PC-9 (cell line): ENCODE measurements at regions of chr13 and their contacts with region 1.

Region 1: DNA sequence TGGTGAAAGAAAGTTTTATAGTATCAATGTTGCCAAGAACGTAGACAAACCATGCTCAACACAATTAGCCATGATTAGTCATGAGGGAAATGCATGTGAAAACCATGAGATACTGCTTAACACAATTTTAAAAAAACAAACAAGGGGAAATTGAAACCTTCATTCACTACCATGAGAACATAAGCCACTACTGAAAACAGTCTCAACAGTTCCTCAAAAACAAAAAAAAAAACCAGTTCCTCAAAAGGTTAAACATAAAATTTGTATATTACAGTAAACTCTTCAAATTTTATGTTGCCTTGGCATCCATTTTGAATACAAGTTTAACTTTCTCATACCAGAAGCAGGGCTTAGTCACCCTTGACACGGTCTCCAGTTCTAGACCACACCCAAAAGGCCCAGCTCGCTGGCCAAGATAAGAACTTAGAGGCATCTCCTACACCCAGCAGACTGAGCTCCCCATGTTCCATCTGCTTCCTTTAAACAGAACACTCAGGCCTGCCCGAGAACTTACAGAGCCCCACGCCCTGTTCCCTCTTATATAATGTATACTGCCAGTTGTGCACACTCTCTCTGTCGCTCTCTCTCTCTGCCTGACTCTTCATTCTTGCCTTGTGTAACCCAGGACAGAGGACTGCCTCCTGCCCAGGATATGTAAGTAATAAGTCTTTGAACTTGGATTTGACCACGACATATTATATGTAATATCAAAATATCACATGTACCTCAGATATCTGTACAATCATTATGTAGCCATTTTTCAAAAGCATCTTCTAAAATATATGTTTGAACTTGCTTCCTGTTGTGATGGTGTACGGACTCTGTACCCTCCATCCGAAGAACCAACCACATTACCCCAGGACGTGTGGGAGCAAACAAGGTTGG is 67.4 kb downstream of the STK24 start:
- DNase-seq: peak; percentile 71 to 91
- H3K4me3 ChIP-seq: peak overlapping the region; percentile 31; the same call in 1 of the 2 replicates
- H3K27ac ChIP-seq: peak overlapping the region; percentile 99
- H3K4me1 ChIP-seq: peaks cover 58% of the 10 kb centered on the region
- H3K27me3 ChIP-seq: no peaks in the 10 kb centered on the region
- CTCF ChIP-seq: no peak

Region 2: DNA sequence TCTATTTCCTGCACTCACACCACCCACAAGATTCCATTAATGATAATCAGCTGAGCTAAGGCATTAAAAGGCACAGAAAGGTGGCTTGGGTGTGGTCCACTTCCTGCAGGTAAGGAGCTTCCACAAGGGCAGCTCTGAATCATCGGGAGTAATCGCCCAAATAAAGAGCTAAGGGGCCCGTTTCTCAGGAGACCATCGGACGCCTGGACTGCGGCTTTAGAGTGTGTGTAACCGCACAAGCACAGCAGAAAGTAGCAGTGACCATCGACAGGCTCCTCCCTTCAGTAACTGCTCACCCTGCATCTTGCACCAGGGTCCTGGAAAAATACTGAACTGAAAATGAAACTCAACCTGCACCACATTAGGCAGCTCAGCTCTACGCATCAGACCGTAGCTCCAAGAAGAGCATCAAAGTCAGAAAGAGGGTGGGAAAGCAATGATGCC is 61.4 kb after region 1 on chr13:
- CTCF ChIA-PET with region 1: no interaction called
- POLR2A ChIA-PET with region 1: interaction called, 5 read pairs
- intact Hi-C with region 1: loop called (anchors 1 kb)
- DNase-seq: peak; percentile 68 to 98
- H3K4me3 ChIP-seq: peak overlapping the region; percentile 98; the same call in 1 of the 2 replicates
- H3K27ac ChIP-seq: peak overlapping the region; percentile 86
- H3K4me1 ChIP-seq: peaks cover 69% of the 10 kb centered on the region
- H3K27me3 ChIP-seq: no peaks in the 10 kb centered on the region
- CTCF ChIP-seq: no peak

Region 3: DNA sequence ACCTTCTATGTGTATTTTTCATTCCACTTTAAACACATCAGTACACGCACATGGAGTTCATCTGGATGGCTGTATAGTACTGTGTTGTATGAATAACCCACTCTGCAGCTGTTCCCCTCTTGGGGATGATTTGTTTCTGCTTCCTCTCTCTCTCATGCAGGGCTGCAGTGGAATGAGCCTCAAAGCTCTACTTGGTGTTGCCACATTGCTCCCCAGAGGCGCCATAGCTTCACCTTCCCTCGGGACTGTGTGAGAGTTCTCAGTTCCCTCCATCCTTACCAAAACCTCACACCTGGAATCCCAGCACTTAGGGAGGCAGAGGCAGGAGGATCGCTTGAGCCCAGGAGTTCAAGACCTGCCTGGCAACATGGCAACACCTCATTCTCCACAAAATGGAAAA is 826.1 kb after region 1 on chr13:
- CTCF ChIA-PET with region 1: no interaction called
- POLR2A ChIA-PET with region 1: no interaction called
- intact Hi-C with region 1: no loop called
- DNase-seq: no peak
- H3K4me3 ChIP-seq: no peak overlapping the region
- H3K27ac ChIP-seq: no peak overlapping the region
- H3K4me1 ChIP-seq: no peaks in the 10 kb centered on the region
- H3K27me3 ChIP-seq: no peaks in the 10 kb centered on the region
- CTCF ChIP-seq: no peak